Mammary epithelial cell (primary cell): ENCODE measurements at regions of chr6 and their contacts with region 1.

Region 1: GRCh38 chr6:3209114-3210023 is 18.1 kb downstream of the TUBB2B start:
- DNase-seq: peak; percentile 99
- H3K4me3 ChIP-seq: no peak overlapping the region
- H3K27ac ChIP-seq: peak overlapping the region; percentile 88
- H3K4me1 ChIP-seq: peaks cover 33% of the 10 kb centered on the region
- H3K27me3 ChIP-seq: no peaks in the 10 kb centered on the region
- CTCF ChIP-seq: peak in 1 of 2 donors; percentile 55

Region 2: GRCh38 chr6:3068329-3069214 is 140.8 kb before region 1 on chr6 and contains the start of gene RIPK1:
- CTCF ChIA-PET with region 1: no interaction called
- dilution Hi-C with region 1: no loop called
- in situ Hi-C with region 1: no loop called
- intact Hi-C with region 1: loop called (anchors 2 kb)
- DNase-seq: peak; percentile 90
- H3K4me3 ChIP-seq: peak within 1 kb of the TSS; percentile 66 to 84 (median 75)
- H3K27ac ChIP-seq: peak within 1 kb of the TSS; percentile 84
- H3K4me1 ChIP-seq: peaks cover 7% of the 10 kb centered on the region
- H3K27me3 ChIP-seq: no peaks in the 10 kb centered on the region
- CTCF ChIP-seq: peak in 1 of 2 donors; percentile 49
- total RNA-seq, gene RIPK1: 21.1 to 26.8 TPM

Region 3: DNA sequence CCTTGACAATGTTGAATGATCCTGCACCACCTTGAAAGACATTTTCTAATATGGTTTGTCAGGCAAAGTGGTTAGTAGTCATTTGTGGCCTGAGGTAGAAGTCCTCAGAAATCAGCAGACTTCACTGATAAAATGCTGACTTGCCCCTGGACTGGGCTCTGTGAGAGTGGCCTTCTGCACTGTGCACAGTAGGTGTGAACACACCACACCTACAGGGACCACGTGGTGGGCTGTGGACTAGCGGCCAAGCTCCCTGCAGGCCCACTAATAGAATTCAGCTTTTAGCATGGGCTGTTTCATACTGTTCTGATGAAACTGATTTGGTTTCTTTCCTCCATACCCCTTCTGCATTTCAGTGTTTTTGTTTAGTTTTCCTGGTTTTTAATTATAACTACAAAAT is 83.6 kb before region 1 on chr6:
- CTCF ChIA-PET with region 1: interaction called, 19 read pairs
- dilution Hi-C with region 1: no loop called
- in situ Hi-C with region 1: no loop called
- intact Hi-C with region 1: loop called (anchors 1 kb)
- DNase-seq: no peak
- H3K4me3 ChIP-seq: no peak overlapping the region
- H3K27ac ChIP-seq: no peak overlapping the region
- H3K4me1 ChIP-seq: no peaks in the 10 kb centered on the region
- H3K27me3 ChIP-seq: no peaks in the 10 kb centered on the region
- CTCF ChIP-seq: no peak

Region 4: DNA sequence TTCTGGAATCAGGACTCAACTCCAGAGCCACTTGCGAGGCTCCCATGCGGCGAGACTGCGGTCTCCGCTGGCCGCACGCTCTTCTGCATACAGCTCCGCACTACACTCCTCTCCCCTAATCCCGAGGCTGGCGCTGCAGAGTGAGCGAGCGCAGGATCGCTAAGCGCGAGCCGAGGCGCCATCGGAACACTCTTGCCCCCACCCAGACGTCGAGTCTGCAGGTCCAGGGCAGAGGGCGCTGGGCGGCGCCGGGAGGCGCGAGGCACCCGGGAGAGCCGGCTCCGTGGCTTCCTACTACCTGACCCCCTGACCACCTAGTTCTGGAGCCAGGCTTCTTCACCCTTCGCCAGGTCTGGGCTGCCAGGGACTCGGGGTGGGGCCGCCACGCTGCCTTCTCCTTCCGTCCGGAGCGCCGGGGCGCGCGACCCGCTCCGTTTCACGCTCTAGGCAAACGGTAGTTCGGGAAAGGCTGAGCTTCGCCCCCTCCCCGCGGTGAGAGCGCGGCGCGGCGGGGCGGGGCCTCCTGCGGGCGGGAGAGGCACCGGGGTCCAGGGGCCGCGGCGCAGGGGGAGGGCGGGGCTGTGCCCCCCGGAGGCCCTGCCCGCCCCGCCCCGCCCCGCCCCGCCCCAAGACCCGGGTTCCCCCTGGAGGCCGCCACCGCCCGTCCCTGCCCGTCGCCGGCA is 46.7 kb before region 1 on chr6:
- CTCF ChIA-PET with region 1: interaction called, 3 read pairs
- dilution Hi-C with region 1: no loop called
- in situ Hi-C with region 1: loop called in 1 of 2 experiments (anchors 5 kb)
- intact Hi-C with region 1: loop called (anchors 1 kb)
- DNase-seq: peak; percentile 69
- H3K4me3 ChIP-seq: peak overlapping the region; percentile 54 to 74 (median 62)
- H3K27ac ChIP-seq: peak overlapping the region; percentile 18
- H3K4me1 ChIP-seq: peaks cover 13% of the 10 kb centered on the region
- H3K27me3 ChIP-seq: no peaks in the 10 kb centered on the region
- CTCF ChIP-seq: peak in 1 of 2 donors; percentile 30